GM12878 (cell line): ENCODE measurements at regions of chr7 and their contacts with region 1.

Region 1: DNA sequence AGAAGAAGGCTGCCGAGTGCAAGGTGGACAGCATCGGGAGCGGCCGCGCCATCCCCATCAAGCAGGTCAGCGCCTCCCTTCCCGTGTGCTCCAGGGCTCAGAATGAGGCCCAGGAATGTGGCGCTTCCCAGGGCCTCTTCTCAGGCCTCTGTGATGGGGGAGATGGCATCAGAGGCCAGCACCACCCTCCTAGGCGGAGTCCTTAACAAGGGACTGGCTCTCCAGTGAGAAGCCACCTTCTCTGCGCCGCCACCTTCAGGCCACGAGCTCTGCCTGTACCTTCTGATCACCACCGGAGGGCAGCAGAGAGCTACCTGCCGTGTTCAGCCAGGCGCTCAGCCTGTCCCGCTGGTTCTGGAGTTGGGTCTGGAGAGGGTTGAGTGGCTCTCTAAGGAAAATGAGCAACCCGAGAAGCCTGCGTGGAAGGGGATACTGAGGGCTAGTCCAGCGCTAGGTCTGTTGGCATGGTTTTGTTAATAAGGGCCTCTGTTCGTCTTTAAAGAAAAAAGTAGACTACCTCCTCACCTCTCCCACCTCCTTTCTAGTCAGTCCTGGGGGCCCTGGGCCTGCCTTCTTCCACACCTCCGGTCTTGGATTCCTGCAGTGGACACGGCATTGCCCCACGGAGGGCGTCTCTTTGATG is 37.7 kb downstream of the AGAP3 start:
- DNase-seq: no peak
- ATAC-seq: peak; percentile 99
- H3K4me3 ChIP-seq: no peak overlapping the region
- H3K27ac ChIP-seq: no peak overlapping the region
- H3K4me1 ChIP-seq: no peaks in the 10 kb centered on the region
- H3K27me3 ChIP-seq: no peaks in the 10 kb centered on the region
- CTCF ChIP-seq: peak; percentile 99; a peak in 5 of 6 replicates
- EP300 ChIP-seq: no peak
- POLR2A ChIP-seq: no peak; the same call in 1 of the 2 replicates
- RAD21 ChIP-seq: peak; percentile 86

Region 2: GRCh38 chr7:150997075-150997511 is 126.8 kb before region 1 on chr7:
- CTCF ChIA-PET with region 1: no interaction called
- POLR2A ChIA-PET with region 1: no interaction called
- RAD21 ChIA-PET with region 1: no interaction called
- SMC1A ChIA-PET with region 1: no interaction called
- in situ Hi-C with region 1: no loop called
- intact Hi-C with region 1: no loop called
- DNase-seq: no peak
- ATAC-seq: no peak
- H3K4me3 ChIP-seq: no peak overlapping the region
- H3K27ac ChIP-seq: no peak overlapping the region
- H3K4me1 ChIP-seq: no peaks in the 10 kb centered on the region
- H3K27me3 ChIP-seq: no peaks in the 10 kb centered on the region
- CTCF ChIP-seq: no peak
- EP300 ChIP-seq: no peak
- POLR2A ChIP-seq: no peak
- RAD21 ChIP-seq: no peak

Region 3: GRCh38 chr7:151172273-151173141 is 48.6 kb after region 1 on chr7:
- CTCF ChIA-PET with region 1: interaction called, 4 read pairs
- POLR2A ChIA-PET with region 1: no interaction called
- RAD21 ChIA-PET with region 1: no interaction called
- SMC1A ChIA-PET with region 1: no interaction called
- in situ Hi-C with region 1: no loop called
- intact Hi-C with region 1: loop called (anchors 1 kb)
- DNase-seq: no peak
- ATAC-seq: peak; percentile 87
- H3K4me3 ChIP-seq: no peak overlapping the region
- H3K27ac ChIP-seq: no peak overlapping the region
- H3K4me1 ChIP-seq: no peaks in the 10 kb centered on the region
- H3K27me3 ChIP-seq: peaks cover 5 to 19% of the 10 kb centered on the region in 2 experiments
- CTCF ChIP-seq: peak; percentile 100; a peak in 5 of 6 replicates
- EP300 ChIP-seq: no peak
- POLR2A ChIP-seq: no peak
- RAD21 ChIP-seq: peak; percentile 75

Region 4: DNA sequence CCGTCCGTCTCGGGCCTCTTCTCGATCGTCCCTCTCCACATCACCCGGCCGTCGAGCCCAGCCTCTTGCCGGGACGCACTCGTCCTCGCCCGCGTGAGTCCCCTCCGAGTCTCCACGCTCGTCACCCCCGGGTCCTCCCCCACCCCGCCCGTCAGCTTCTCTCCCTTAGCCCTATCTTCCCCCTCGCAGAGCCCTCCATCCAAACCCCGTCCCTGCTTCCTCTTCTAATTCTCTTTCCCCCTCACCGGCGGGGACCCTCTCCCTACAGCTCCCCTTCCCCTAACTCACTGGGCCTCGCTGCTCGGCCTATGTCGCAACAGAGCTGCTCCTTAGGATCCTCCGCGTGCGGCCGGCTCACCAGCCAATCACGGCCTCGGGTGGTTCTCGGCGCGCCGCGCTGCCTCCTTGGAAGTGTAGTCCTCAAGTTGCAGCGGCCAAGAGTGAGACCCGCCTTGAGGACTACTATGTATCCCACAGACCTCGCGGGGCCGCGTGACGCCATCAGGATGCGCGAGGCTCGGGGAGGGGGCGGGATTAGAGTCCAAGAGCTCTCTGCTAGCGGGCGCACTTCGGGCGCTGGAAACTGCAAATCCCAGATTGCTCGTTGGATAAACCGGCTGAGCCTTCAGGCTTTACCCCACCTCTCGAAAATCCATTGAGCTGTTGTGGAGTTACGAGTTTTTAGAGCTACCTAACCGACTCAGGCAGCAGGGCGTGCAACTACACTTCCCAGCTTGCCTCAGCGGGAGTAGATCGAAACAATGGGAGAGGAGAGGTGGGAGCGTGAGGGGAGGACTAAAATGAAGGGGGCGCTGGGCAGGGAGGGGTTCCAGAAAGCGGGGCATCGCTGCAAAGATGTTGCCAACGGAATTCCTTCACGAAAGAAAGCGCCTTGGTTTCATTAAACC is 103.2 kb after region 1 on chr7 and contains the start of gene ABCF2:
- CTCF ChIA-PET with region 1: interaction called, 11 read pairs
- POLR2A ChIA-PET with region 1: no interaction called
- RAD21 ChIA-PET with region 1: no interaction called
- SMC1A ChIA-PET with region 1: no interaction called
- in situ Hi-C with region 1: no loop called
- intact Hi-C with region 1: no loop called
- DNase-seq: peak; percentile 85
- ATAC-seq: peak; percentile 100
- H3K4me3 ChIP-seq: peak within 1 kb of the TSS; percentile 89
- H3K27ac ChIP-seq: peak within 1 kb of the TSS; percentile 22
- H3K4me1 ChIP-seq: no peaks in the 10 kb centered on the region
- H3K27me3 ChIP-seq: no peaks in the 10 kb centered on the region
- CTCF ChIP-seq: no peak
- EP300 ChIP-seq: no peak
- POLR2A ChIP-seq: peak; percentile 82
- RAD21 ChIP-seq: no peak
- polyA plus RNA-seq, gene ABCF2: 39.6 to 50.9 TPM

Region 5: GRCh38 chr7:151304856-151305255 is 180.9 kb after region 1 on chr7:
- CTCF ChIA-PET with region 1: interaction called, 8 read pairs
- POLR2A ChIA-PET with region 1: no interaction called
- RAD21 ChIA-PET with region 1: no interaction called
- SMC1A ChIA-PET with region 1: interaction called, 3 read pairs
- in situ Hi-C with region 1: no loop called
- intact Hi-C with region 1: loop called (anchors 1 kb)
- DNase-seq: no peak
- ATAC-seq: no peak
- H3K4me3 ChIP-seq: no peak overlapping the region
- H3K27ac ChIP-seq: no peak overlapping the region
- H3K4me1 ChIP-seq: peaks cover 3% of the 10 kb centered on the region
- H3K27me3 ChIP-seq: peaks cover 0 to 3% of the 10 kb centered on the region in 2 experiments; a peak in 2 of 4 replicates
- CTCF ChIP-seq: no peak
- EP300 ChIP-seq: no peak
- POLR2A ChIP-seq: no peak
- RAD21 ChIP-seq: no peak